ENCODE measurements at regions of chr7 and their contacts with region 1.

Region 1: DNA sequence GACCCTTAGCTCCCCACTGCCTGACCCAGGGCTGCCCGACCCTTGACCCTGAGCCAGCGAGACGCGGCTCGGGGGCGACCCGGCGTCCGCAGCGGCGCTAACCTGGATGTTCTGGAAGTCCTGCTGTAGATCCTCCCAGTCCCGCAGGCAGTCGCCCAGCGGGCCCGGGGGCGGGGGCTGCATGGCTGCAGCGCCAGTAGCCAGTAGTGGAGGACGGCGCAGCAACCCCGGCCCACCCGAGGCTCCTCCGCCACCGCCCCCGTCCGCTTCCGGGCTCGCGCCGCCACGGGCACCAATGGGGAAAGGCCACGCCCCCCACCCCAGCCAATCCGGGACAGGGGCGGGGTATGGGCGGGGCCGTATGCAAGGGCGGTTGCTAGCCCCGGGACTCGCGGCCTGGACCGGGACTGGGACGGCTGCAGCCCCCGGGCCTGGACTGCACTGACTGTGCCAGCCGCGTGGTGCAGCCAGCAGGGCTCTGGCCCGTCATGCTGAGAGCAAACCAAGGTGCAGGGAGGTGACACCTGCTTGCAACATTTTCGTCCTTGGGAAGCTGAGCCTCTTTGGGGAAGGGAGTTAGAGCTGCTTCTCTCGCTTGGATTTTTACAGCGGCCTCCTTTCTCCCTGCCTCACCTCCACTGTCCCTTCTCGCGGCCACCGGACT is at the start of gene TMEM120A:
- DNase-seq: peak in 1 of 2 donors; percentile 95
- H3K4me3 ChIP-seq: peak within 1 kb of the TSS; percentile 86 to 98
- H3K27ac ChIP-seq: peak within 1 kb of the TSS; percentile 92
- H3K4me1 ChIP-seq: peaks cover 31% of the 10 kb centered on the region
- H3K27me3 ChIP-seq: no peaks in the 10 kb centered on the region
- CTCF ChIP-seq: peak in 1 of 3 experiments; percentile 6
- POLR2A ChIP-seq: peak in 1 of 2 donors; percentile 69
- total RNA-seq, gene TMEM120A: 45.9 TPM

Region 2: DNA sequence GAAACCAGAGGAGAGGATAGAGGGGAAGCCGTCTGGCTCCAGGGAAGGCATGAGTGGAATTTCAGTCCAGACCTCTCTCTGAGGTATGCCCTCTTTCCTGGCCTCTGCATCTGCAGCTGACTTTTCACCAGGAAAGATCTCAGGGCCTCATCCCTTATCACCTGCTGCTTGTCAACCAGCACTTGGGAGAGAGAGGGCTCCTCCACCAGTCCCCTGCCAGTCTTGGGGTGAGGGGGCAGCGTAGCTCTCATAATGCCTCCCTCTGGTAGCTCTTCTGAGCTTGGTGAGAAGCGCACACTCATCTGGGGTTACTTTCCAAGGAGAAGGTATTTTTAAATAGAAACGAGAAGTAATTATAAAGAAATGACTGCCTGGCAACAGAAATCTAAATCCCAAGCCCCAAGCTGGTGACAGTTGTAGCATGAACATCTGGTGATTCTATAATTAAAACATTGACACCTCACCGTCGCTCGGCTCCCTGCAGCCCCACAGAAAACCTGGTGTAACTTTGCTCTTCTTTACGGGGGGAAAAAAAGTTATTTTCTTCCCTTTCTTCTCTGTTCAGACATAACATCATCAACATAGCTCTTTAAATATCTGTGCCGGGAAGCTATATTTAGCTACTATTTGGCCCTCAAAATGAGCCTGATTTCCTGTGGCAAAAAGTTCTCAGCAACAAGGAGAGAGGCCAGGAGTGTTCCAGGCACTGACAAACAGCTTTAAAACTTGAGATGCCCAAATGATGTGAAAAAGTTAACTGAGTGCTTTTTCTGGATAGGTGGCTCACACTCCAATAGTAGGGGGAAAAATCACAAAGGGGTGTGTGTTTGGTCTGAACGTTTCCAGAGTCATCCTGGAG is 282.6 kb before region 1 on chr7:
- intact Hi-C with region 1: no loop called
- DNase-seq: no peak
- H3K4me3 ChIP-seq: no peak overlapping the region
- H3K27ac ChIP-seq: peak overlapping the region; percentile 22
- H3K4me1 ChIP-seq: peaks cover 8% of the 10 kb centered on the region
- H3K27me3 ChIP-seq: no peaks in the 10 kb centered on the region
- CTCF ChIP-seq: no peak
- POLR2A ChIP-seq: no peak

Region 3: GRCh38 chr7:75905785-75906604 is 88.5 kb before region 1 on chr7:
- intact Hi-C with region 1: loop called (anchors 2 kb)
- DNase-seq: peak in 1 of 2 donors; percentile 94
- H3K4me3 ChIP-seq: no peak overlapping the region
- H3K27ac ChIP-seq: peak overlapping the region; percentile 57
- H3K4me1 ChIP-seq: peaks cover 5% of the 10 kb centered on the region
- H3K27me3 ChIP-seq: no peaks in the 10 kb centered on the region
- CTCF ChIP-seq: no peak
- POLR2A ChIP-seq: no peak

Region 4: DNA sequence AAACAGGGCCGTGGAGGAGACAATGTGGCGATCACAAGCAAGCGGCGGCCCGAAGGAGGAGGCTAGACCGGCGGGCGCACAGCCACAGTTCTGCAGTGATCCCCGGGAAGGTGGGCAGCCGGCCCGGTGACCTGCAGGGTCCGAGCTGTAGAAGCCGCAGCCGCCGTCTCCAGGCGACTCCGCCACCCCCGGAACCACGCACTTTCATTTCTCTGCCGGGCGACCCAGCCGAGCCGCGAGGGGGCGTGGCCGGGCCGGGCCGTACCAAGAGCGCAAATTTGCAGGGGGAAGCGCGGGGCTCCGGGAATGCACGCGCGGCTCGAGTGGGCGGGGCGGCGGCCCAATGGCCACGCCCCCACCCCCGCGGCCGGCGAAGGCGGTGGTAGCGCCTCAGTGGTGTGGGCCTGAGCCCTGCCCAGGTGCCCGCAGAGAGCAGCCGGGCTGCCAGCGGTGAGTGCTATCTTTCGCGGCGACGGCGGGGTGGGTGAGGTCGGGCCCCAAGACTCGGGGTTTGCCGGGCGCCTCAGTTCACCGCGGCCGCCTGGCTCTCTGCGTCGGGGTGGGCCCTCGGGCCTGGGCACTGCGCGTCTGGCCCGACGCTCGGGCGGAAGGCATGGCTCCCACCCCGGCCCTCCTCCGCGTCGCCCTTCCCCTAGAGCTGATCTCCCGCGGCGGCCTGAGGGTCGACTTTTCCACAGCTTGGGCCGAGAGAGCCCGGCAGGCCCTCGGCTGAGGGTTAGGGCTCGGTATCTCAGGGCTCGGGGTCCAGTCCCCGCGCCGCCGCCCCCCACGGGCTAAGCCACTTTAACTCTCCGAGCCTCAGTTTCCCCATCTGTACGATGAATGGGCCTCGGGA is 79.6 kb before region 1 on chr7 and contains the start of gene POR:
- intact Hi-C with region 1: loop called (anchors 2 kb)
- DNase-seq: peak in 1 of 2 donors; percentile 96
- H3K4me3 ChIP-seq: peak within 1 kb of the TSS; percentile 80 to 94
- H3K27ac ChIP-seq: peak within 1 kb of the TSS; percentile 85
- H3K4me1 ChIP-seq: peaks cover 39% of the 10 kb centered on the region
- H3K27me3 ChIP-seq: no peaks in the 10 kb centered on the region
- CTCF ChIP-seq: peak in 2 of 3 experiments; percentile 2 to 11
- POLR2A ChIP-seq: peak; percentile 73 to 95
- total RNA-seq, gene POR: 94.3 TPM

Measured in vagina (tissue), 2 donors.